MCF 10A (cell line): ENCODE measurements at regions of chr5 and their contacts with region 1.

Region 1: GRCh38 chr5:54492178-54492577 is 25.4 kb upstream of the SNX18 start:
- DNase-seq: no peak
- H3K4me3 Mint-ChIP-seq: no peak overlapping the region
- H3K27ac Mint-ChIP-seq: no peak overlapping the region
- H3K4me1 Mint-ChIP-seq: no peaks in the 10 kb centered on the region
- H3K27me3 Mint-ChIP-seq: no peaks in the 10 kb centered on the region
- CTCF ChIP-seq: no peak

Region 2: DNA sequence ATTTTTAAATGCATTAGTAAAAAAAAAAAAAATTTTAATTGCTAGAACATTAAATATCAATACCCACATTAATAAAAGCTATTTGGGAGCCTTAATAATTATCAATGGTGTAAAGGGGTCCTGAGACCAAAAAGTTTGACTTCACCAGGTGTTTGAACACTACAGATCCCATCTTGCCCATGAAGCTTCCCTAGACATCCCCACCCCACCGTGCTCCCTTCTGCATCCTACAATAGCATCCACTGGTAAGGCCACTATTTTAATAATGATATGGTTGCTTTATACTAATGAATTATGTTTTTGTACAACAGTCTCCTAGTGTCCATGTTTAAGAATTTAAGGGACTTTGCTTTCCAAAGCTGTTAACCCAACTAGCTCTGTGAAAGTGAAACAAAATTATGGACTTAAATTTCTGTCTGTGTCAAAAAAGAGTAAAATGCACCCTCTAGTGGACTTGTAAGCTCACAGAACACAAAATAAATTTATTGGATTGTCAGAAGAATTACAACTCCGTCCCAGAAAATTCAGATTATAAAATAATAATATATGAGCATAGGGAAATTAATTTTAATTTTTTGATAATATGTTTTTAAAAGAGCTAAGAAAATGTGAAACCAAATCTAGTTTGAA is 257.8 kb before region 1 on chr5:
- CTCF ChIA-PET with region 1: interaction called, 20 read pairs
- POLR2A ChIA-PET with region 1: no interaction called
- intact Hi-C with region 1: no loop called
- DNase-seq: peak; percentile 36
- H3K4me3 Mint-ChIP-seq: no peak overlapping the region
- H3K27ac Mint-ChIP-seq: no peak overlapping the region
- H3K4me1 Mint-ChIP-seq: peaks cover under 1% of the 10 kb centered on the region
- H3K27me3 Mint-ChIP-seq: no peaks in the 10 kb centered on the region
- CTCF ChIP-seq: peak; percentile 52

Region 3: GRCh38 chr5:54276048-54276447 is 216.1 kb before region 1 on chr5:
- CTCF ChIA-PET with region 1: interaction called, 11 read pairs
- POLR2A ChIA-PET with region 1: no interaction called
- intact Hi-C with region 1: no loop called
- DNase-seq: no peak
- H3K4me3 Mint-ChIP-seq: no peak overlapping the region
- H3K27ac Mint-ChIP-seq: no peak overlapping the region
- H3K4me1 Mint-ChIP-seq: peaks cover 7% of the 10 kb centered on the region
- H3K27me3 Mint-ChIP-seq: no peaks in the 10 kb centered on the region
- CTCF ChIP-seq: no peak

Region 4: GRCh38 chr5:54421976-54422375 is 70.2 kb before region 1 on chr5:
- CTCF ChIA-PET with region 1: interaction called, 21 read pairs
- POLR2A ChIA-PET with region 1: interaction called, 6 read pairs
- intact Hi-C with region 1: loop called (anchors 2 kb)
- DNase-seq: no peak
- H3K4me3 Mint-ChIP-seq: no peak overlapping the region
- H3K27ac Mint-ChIP-seq: no peak overlapping the region
- H3K4me1 Mint-ChIP-seq: peaks cover 14% of the 10 kb centered on the region
- H3K27me3 Mint-ChIP-seq: no peaks in the 10 kb centered on the region
- CTCF ChIP-seq: no peak

Region 5: DNA sequence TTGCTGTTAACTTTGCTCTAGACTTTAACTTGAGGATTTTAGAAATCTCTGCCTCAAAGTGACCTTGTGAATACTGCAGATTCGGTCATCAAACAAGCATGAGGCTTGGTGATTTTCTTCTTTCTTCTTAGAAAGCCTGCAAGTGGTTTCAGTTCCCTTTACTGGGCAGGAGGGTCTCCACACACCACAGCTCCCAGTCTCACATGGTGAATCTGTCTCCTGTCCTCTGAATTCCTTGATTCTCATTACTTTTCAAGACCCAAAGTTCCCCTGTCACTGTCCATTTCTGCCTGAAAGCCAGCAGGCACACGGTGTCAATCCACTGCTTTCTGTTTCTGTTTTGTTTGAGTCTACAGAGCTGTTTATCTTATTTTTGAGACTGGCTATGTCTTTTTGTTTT is 22.6 kb before region 1 on chr5:
- CTCF ChIA-PET with region 1: interaction called, 21 read pairs
- POLR2A ChIA-PET with region 1: interaction called, 3 read pairs
- intact Hi-C with region 1: no loop called
- DNase-seq: no peak
- H3K4me3 Mint-ChIP-seq: peak overlapping the region; percentile 22
- H3K27ac Mint-ChIP-seq: no peak overlapping the region
- H3K4me1 Mint-ChIP-seq: peaks cover 8% of the 10 kb centered on the region
- H3K27me3 Mint-ChIP-seq: no peaks in the 10 kb centered on the region
- CTCF ChIP-seq: no peak

Region 6: DNA sequence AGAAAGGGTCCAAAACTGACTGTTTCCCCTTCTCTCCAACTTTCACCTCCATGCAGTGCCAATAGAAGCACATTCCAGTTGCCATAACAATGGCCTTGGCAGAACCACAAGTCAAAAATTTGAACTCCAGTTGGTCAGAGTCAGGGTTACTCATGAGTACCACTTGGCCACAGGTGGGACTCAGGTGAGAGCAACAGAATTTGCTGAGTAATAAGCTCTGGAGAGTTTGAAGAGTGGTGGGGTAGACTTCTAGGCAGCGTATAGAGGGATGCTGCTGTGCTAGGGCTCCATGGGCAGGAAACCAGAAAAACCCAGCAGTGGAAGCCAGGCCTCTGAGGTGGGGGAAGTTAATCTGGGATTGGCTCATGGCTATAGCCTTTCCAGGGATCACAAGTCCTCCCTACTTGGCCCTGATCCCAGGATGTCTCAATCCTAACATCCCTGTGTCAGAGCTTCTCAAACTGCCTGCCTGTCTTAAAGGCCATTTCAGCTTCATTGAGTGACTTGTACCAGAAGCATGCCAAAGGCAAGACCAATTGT is 55.6 kb after region 1 on chr5:
- CTCF ChIA-PET with region 1: no interaction called
- POLR2A ChIA-PET with region 1: no interaction called
- intact Hi-C with region 1: no loop called
- DNase-seq: peak; percentile 90
- H3K4me3 Mint-ChIP-seq: no peak overlapping the region
- H3K27ac Mint-ChIP-seq: no peak overlapping the region
- H3K4me1 Mint-ChIP-seq: peaks cover 5% of the 10 kb centered on the region
- H3K27me3 Mint-ChIP-seq: no peaks in the 10 kb centered on the region
- CTCF ChIP-seq: no peak